Activated T-helper 1 cell treated with anti-CD3 and anti-CD28 coated beads, Interleukin-12 subunit alpha, Interleukin-12 subunit beta, Interleukin-2, Interleukin-4 antibody, amounts not matched to agents 30 ng/mL and 10 ng/mL and 1 ng/mL, durations not matched to agents 14 hours and 24 hours and 36 hours (primary cell): ENCODE measurements at regions of chr6 and their contacts with region 1.

Region 1: GRCh38 chr6:28104392-28105244 is 19.8 kb upstream of the ZSCAN16 start:
- DNase-seq: peak; percentile 75
- H3K4me3 Mint-ChIP-seq: peak overlapping the region; percentile 83
- H3K27ac Mint-ChIP-seq: peak overlapping the region; percentile 61
- H3K4me1 Mint-ChIP-seq: peaks cover 5% of the 10 kb centered on the region
- H3K27me3 Mint-ChIP-seq: peaks cover 18% of the 10 kb centered on the region

Region 2: GRCh38 chr6:28080631-28081485 is 23.8 kb before region 1 on chr6:
- intact Hi-C with region 1: loop called (anchors 1 kb)
- DNase-seq: peak; percentile 82
- H3K4me3 Mint-ChIP-seq: peak overlapping the region; percentile 96
- H3K27ac Mint-ChIP-seq: peak overlapping the region; percentile 96
- H3K4me1 Mint-ChIP-seq: peaks cover 21% of the 10 kb centered on the region
- H3K27me3 Mint-ChIP-seq: peaks cover 2% of the 10 kb centered on the region

Region 3: GRCh38 chr6:28124102-28124970 is 19.7 kb after region 1 on chr6 and contains the start of gene ZSCAN16:
- intact Hi-C with region 1: loop called (anchors 1 kb)
- DNase-seq: peak; percentile 66
- H3K4me3 Mint-ChIP-seq: peak within 1 kb of the TSS; percentile 95
- H3K27ac Mint-ChIP-seq: peak within 1 kb of the TSS; percentile 86
- H3K4me1 Mint-ChIP-seq: peaks cover 41% of the 10 kb centered on the region
- H3K27me3 Mint-ChIP-seq: no peaks in the 10 kb centered on the region
- total RNA-seq, gene ZSCAN16: 4.8 TPM in 2 replicates

Region 4: DNA sequence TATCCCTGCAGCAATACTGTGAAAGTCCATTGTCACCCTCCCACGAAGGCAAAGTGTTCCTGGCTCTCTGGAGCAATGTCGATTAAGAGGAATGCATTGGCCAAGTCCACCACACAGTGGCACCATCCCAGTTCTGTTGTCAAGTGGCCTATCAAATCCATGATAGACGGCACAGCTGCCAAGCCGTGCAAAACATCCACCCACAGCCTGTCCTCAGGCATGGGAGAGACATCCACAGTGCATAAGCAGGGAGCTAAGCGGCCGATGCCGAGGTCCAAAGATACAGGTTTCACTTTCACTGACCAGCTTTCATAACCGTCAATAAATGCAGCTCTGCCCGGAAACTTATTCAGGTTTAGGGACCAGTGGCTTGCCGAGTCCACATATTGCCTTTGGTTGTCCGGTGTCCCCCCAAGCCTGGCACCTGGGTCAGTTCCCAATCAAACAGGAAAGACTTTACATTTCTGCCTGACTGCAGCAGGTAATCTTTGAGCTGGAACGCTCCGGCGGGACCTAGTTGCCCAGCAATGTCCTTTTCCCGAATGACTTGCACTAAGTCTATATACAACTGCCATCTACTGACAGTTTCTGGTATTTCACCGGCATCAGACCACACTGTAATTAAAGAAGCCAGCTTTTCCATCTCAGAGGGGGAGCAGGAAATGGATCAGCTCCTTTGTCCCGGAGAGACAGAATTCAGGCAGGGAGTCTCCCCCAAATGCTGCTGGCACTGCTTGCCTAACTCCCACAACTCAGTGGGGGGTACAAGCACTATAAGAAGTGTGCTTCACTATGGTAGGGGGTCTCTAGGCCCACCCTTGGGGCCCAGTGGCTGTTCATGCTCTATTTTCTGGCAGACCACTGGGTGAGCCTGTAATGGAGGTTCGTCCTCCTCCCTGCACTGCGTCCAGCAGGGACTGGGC is 251.4 kb after region 1 on chr6:
- intact Hi-C with region 1: loop called (anchors 1 kb)
- DNase-seq: peak; percentile 48
- H3K4me3 Mint-ChIP-seq: peak overlapping the region; percentile 86
- H3K27ac Mint-ChIP-seq: peak overlapping the region; percentile 72
- H3K4me1 Mint-ChIP-seq: peaks cover 25% of the 10 kb centered on the region
- H3K27me3 Mint-ChIP-seq: no peaks in the 10 kb centered on the region